ENCODE measurements at regions of chr14 and their contacts with region 1.

Region 1: GRCh38 chr14:59429790-59430189 is 35.4 kb downstream of the GPR135 start:
- DNase-seq: no peak
- ATAC-seq: no peak
- H3K4me3 ChIP-seq: no peak overlapping the region
- H3K27ac ChIP-seq: no peak overlapping the region
- H3K4me1 ChIP-seq: peaks cover 0 to 8% of the 10 kb centered on the region in 2 donors
- H3K27me3 ChIP-seq: no peaks in the 10 kb centered on the region
- CTCF ChIP-seq: no peak

Region 2: DNA sequence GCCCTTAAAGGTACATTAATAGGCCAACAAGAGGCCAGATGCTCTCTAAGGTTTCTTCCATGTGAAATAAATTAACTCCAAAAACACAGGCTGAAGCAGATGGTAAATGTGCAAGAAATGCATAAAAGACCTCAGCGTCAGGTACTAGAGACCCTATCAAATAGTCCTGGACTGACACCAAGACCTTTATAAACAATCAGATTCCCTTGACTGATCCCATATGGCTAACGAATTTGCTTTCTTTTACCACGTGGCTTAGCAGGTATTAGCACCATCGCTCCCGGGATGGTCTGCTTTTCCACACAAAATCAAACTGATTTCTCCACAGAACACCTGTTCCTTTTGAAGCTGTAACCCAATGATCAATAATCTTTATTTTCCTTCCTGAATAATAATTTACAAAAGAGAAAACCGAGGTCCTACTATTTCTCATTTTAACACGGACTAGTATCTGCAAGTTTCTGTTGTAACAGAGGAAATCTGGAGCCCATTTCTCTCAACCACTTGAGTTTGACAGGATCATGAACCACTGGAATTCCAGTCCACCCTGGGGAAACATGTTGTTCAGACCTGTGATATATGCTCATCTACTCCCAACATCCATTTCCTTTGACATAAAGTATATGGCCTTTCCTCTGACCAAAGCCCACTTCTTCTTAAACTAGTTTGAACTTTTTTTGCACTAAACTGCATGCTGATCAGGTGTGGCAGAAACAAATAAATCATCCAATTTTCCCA is 289.5 kb before region 1 on chr14:
- intact Hi-C with region 1: loop called in 1 of 2 experiments (anchors 5 kb)
- DNase-seq: no peak
- ATAC-seq: no peak
- H3K4me3 ChIP-seq: no peak overlapping the region
- H3K27ac ChIP-seq: no peak overlapping the region
- H3K4me1 ChIP-seq: no peaks in the 10 kb centered on the region
- H3K27me3 ChIP-seq: no peaks in the 10 kb centered on the region
- CTCF ChIP-seq: no peak